ENCODE measurements at regions of chr16 and their contacts with region 1.

Region 1: GRCh38 chr16:9580025-9580424 is 488.6 kb downstream of the HAPSTR1 start:
- DNase-seq: no peak

Region 2: GRCh38 chr16:8380311-8380710 is 1199.7 kb before region 1 on chr16:
- intact Hi-C with region 1: loop called in 1 of 2 experiments (anchors 10 kb)
- DNase-seq: no peak

Region 3: DNA sequence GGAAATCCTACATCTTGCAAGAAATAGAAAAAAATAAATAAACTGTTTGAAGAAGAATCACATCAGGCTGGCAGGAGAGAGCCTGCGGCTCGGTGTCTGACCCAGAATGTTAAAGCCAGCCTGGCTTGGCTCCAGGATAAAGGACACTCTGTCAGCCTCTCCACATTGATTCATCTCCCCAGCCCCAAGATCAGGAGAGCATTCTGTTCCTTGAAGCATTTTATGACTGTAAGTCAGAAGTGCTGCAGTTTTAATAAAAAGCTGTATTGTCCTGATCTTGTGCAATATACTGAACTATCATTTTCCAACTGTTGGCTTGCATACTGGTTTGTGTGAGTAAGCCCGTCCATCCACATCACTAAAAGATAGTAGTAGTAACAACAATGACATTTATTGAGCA is 62.0 kb before region 1 on chr16:
- intact Hi-C with region 1: no loop called
- DNase-seq: peak; percentile 82

Measured in posterior vena cava (tissue), 2 donors.